GM12878 (cell line): ENCODE measurements at regions of chr1 and their contacts with region 1.

Region 1: DNA sequence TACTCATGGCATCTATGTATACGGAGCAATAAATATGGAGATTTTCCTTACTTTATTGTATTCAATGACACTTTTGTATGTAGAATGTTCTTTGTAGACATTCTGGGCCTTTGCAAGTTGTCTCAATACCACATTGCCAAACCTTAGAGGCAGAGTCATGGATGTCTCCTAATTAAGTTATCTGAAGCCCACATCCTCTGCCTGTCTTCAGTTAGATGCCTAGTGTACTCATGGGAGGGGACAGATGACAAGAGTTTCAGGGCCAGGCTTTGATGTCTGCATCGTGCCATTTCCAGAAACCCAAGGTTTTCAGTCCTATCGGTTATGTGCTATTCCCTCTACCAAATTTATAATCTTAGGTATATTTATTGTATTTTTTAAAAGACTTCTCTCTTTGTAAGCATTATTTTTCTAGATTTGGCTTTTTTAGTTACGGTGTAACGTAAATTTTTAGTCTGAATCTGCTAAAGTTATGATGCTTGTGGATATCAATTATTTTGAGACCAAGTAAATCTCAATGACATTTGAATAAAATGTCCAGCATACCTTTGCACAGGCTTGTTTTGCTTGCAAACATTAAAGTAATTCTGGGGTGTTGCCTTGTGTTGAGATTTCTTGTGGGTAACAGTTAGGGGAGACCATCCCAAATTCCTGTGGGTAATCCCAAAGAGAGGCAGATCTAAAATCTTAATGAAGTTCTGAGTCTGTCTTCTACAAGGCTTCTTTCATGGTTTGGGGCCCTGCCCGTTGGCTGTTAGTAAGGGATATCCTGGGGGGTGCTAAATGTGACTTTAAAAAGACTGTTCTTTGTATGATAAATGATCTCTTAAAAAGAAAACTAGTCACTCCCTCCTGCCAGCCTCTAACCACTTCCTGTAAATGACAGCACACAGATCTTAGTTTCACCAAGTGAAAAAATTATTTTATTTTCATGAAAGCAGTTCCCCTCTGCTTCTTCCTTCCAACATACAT is 8.0 kb upstream of the MACF1 start:
- DNase-seq: no peak
- ATAC-seq: peak; percentile 77
- H3K4me3 ChIP-seq: peak overlapping the region; percentile 26
- H3K27ac ChIP-seq: peak overlapping the region; percentile 53
- H3K4me1 ChIP-seq: peaks cover 54% of the 10 kb centered on the region
- H3K27me3 ChIP-seq: no peaks in the 10 kb centered on the region
- CTCF ChIP-seq: no peak
- EP300 ChIP-seq: peak in 1 of 2 experiments; percentile 60; a peak in 1 of 4 replicates
- POLR2A ChIP-seq: no peak
- RAD21 ChIP-seq: no peak

Region 2: GRCh38 chr1:39098546-39099250 is 97.8 kb before region 1 on chr1:
- CTCF ChIA-PET with region 1: interaction called, 465 read pairs
- POLR2A ChIA-PET with region 1: interaction called, 16 read pairs
- RAD21 ChIA-PET with region 1: interaction called, 304 read pairs
- SMC1A ChIA-PET with region 1: interaction called, 164 read pairs
- in situ Hi-C with region 1: no loop called
- intact Hi-C with region 1: loop called (anchors 1 kb)
- DNase-seq: no peak
- ATAC-seq: peak; percentile 79
- H3K4me3 ChIP-seq: no peak overlapping the region
- H3K27ac ChIP-seq: no peak overlapping the region
- H3K4me1 ChIP-seq: peaks cover 13% of the 10 kb centered on the region
- H3K27me3 ChIP-seq: no peaks in the 10 kb centered on the region
- CTCF ChIP-seq: peak; percentile 76 to 87 (median 86)
- EP300 ChIP-seq: no peak
- POLR2A ChIP-seq: no peak
- RAD21 ChIP-seq: peak; percentile 96

Region 3: DNA sequence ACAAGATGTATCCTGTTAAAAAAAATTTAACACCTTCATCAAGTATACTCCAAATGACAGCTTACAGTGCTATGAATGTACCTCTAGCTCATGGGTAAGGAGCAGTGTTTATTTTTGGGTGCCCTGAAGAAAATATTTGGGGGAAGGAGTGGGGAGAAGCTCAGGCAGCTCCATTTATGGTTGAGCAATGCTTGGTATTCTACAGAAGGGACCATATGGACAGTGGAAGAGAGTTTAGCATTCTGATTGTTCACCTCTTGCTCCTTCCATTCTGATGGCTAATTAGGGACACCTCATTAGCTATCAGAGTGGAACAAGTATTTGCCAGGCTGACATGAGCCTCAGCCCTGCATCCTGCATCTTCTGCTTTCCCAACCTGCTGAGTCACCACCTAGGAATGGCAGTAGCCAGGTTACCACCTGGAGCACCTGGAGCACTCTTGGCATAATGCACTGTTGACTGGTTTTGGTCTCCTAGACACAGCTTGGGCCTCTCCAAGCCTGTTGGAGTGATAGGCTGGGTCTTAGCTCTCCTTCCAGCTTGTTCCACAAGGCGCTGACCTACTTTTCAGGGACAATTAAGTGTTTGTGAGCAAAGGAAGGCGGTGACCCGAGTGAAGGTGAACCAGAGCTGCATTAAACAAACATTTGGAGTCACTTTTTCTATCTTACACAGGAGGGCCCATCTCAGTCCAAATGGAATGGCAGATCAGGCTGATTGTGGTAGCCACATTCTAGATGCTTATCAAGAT is 54.0 kb before region 1 on chr1:
- CTCF ChIA-PET with region 1: interaction called, 29 read pairs
- POLR2A ChIA-PET with region 1: interaction called, 3 read pairs
- RAD21 ChIA-PET with region 1: interaction called, 3 read pairs
- SMC1A ChIA-PET with region 1: interaction called, 11 read pairs
- in situ Hi-C with region 1: no loop called
- intact Hi-C with region 1: no loop called
- DNase-seq: no peak
- ATAC-seq: no peak
- H3K4me3 ChIP-seq: no peak overlapping the region
- H3K27ac ChIP-seq: no peak overlapping the region
- H3K4me1 ChIP-seq: no peaks in the 10 kb centered on the region
- H3K27me3 ChIP-seq: no peaks in the 10 kb centered on the region
- CTCF ChIP-seq: no peak
- EP300 ChIP-seq: no peak
- POLR2A ChIP-seq: no peak
- RAD21 ChIP-seq: no peak

Region 4: GRCh38 chr1:39214998-39215873 is 18.7 kb after region 1 on chr1:
- CTCF ChIA-PET with region 1: interaction called, 190 read pairs
- POLR2A ChIA-PET with region 1: interaction called, 52 read pairs
- RAD21 ChIA-PET with region 1: interaction called, 206 read pairs
- SMC1A ChIA-PET with region 1: interaction called, 253 read pairs
- in situ Hi-C with region 1: no loop called
- intact Hi-C with region 1: loop called (anchors 2 kb)
- DNase-seq: peak; percentile 79
- ATAC-seq: peak; percentile 87
- H3K4me3 ChIP-seq: peak overlapping the region; percentile 85
- H3K27ac ChIP-seq: peak overlapping the region; percentile 87
- H3K4me1 ChIP-seq: peaks cover 19% of the 10 kb centered on the region
- H3K27me3 ChIP-seq: no peaks in the 10 kb centered on the region
- CTCF ChIP-seq: no peak
- EP300 ChIP-seq: no peak
- POLR2A ChIP-seq: peak; percentile 84
- RAD21 ChIP-seq: no peak

Region 5: DNA sequence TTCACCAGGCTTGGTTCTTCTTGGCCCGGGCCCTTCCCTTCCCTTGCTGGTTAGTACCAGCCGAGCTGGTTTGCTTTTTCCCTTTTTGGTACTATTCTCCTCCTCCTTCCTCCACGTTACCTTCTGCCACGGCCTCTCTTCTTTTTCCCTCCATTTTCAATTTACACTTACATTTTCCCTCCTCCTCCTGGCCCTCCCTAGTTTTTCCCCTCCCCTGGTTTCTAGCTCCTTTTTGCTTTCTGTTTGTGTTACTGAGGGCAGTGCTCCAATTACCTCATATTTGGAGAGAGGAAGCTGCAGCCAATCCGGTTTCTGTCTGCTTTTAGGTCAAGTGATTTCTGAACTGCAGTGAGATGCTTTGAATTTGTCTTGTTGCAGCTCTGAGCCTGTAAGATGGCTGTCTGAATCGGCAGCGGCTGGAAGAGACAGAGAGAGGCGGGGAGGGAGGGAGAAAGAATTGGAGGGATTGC is 71.6 kb after region 1 on chr1:
- CTCF ChIA-PET with region 1: interaction called, 918 read pairs
- POLR2A ChIA-PET with region 1: interaction called, 7 read pairs
- RAD21 ChIA-PET with region 1: interaction called, 393 read pairs
- SMC1A ChIA-PET with region 1: interaction called, 655 read pairs
- in situ Hi-C with region 1: no loop called
- intact Hi-C with region 1: no loop called
- DNase-seq: no peak
- ATAC-seq: peak; percentile 29
- H3K4me3 ChIP-seq: peak overlapping the region; percentile 57; the same call in 1 of the 2 replicates
- H3K27ac ChIP-seq: peak overlapping the region; percentile 81
- H3K4me1 ChIP-seq: peaks cover 57% of the 10 kb centered on the region
- H3K27me3 ChIP-seq: no peaks in the 10 kb centered on the region
- CTCF ChIP-seq: no peak
- EP300 ChIP-seq: no peak
- POLR2A ChIP-seq: peak; percentile 38; the same call in 1 of the 2 replicates
- RAD21 ChIP-seq: no peak

Region 6: GRCh38 chr1:39354572-39354971 is 158.0 kb after region 1 on chr1:
- CTCF ChIA-PET with region 1: interaction called, 17 read pairs
- POLR2A ChIA-PET with region 1: no interaction called
- RAD21 ChIA-PET with region 1: interaction called, 5 read pairs
- SMC1A ChIA-PET with region 1: interaction called, 5 read pairs
- in situ Hi-C with region 1: no loop called
- intact Hi-C with region 1: no loop called
- DNase-seq: no peak
- ATAC-seq: no peak
- H3K4me3 ChIP-seq: no peak overlapping the region
- H3K27ac ChIP-seq: no peak overlapping the region
- H3K4me1 ChIP-seq: no peaks in the 10 kb centered on the region
- H3K27me3 ChIP-seq: no peaks in the 10 kb centered on the region
- CTCF ChIP-seq: peak in 2 of 3 experiments; percentile 7 to 20; a peak in 1 of 6 replicates
- EP300 ChIP-seq: no peak
- POLR2A ChIP-seq: no peak
- RAD21 ChIP-seq: 0 out of 2 replicates have a peak, but pooled peaks have one; percentile 7